ENCODE measurements at regions of chr2 and their contacts with region 1.

Region 1: DNA sequence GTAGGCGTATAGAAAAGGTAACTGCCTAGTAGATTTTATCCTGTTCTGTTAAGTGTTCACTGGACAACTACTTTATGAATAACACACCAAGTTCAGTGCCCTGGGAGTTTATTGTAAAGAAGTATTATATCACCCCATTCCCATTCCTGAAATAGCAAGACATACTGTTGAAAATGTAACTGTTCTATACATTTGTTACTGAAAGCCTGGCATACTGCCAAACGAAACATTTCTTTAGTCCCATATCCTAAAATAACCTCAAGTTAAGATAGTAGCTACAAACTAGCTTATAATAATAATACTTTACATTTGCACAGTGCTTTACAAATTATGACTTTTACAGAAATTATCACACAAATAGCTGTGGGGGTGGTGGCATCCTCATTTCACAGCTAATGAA is 25.1 kb downstream of the SPDYA start:
- DNase-seq: no peak
- ATAC-seq: no peak
- H3K4me3 ChIP-seq: no peak overlapping the region
- H3K27ac ChIP-seq: no peak overlapping the region
- H3K4me1 ChIP-seq: no peaks in the 10 kb centered on the region
- H3K27me3 ChIP-seq: no peaks in the 10 kb centered on the region
- CTCF ChIP-seq: no peak
- EP300 ChIP-seq: no peak
- POLR2A ChIP-seq: no peak
- RAD21 ChIP-seq: no peak

Region 2: DNA sequence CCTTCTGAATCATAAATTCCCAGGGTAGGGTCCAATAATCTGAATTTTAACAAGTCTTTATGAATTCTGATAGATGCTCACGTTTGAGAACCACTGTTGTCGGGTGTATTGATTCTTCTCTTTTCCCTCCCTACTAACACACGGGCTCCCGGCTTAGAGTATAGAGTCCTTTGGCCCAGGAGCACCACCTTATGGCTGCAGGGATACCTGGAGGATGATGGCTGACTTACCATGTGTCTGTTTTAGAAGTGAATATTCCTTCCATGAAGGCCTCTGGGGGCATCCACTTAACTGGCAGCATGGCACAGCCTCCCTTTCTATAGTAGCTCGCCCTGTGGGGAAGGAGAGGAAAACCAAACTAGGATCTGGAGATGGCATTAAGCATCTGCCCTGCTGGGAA is 371.2 kb after region 1 on chr2:
- CTCF ChIA-PET with region 1: no interaction called
- POLR2A ChIA-PET with region 1: no interaction called
- in situ Hi-C with region 1: loop called (anchors 10 kb)
- intact Hi-C with region 1: no loop called
- DNase-seq: no peak
- ATAC-seq: no peak
- H3K4me3 ChIP-seq: no peak overlapping the region
- H3K27ac ChIP-seq: no peak overlapping the region
- H3K4me1 ChIP-seq: no peaks in the 10 kb centered on the region
- H3K27me3 ChIP-seq: peaks cover 2 to 14% of the 10 kb centered on the region in 2 experiments; a peak in 2 of 5 replicates
- CTCF ChIP-seq: 0 out of 6 replicates have a peak, but pooled peaks of 1 of the 3 experiments have one; percentile 13
- EP300 ChIP-seq: no peak
- POLR2A ChIP-seq: no peak
- RAD21 ChIP-seq: peak in 1 of 2 experiments; percentile 21; a peak in 1 of 4 replicates

Measured in K562 (cell line).